Activated CD4-positive, alpha-beta memory T cell treated with anti-CD3 and anti-CD28 coated beads for 36 hours (primary cell): ENCODE measurements at regions of chrX and their contacts with region 1.

Region 1: GRCh38 chrX:24371391-24371972 is 11.0 kb downstream of the SUPT20HL1 start:
- DNase-seq: peak; percentile 66
- H3K4me3 Mint-ChIP-seq: peak overlapping the region; percentile 23
- H3K27ac Mint-ChIP-seq: no peak overlapping the region
- H3K4me1 Mint-ChIP-seq: peaks cover 10% of the 10 kb centered on the region
- H3K27me3 Mint-ChIP-seq: peaks cover 2% of the 10 kb centered on the region

Region 2: GRCh38 chrX:24294620-24295019 is 76.9 kb before region 1 on chrX:
- CTCF ChIA-PET with region 1: interaction called, 11 read pairs
- POLR2A ChIA-PET with region 1: no interaction called
- intact Hi-C with region 1: no loop called
- DNase-seq: peak; percentile 56
- H3K4me3 Mint-ChIP-seq: no peak overlapping the region
- H3K27ac Mint-ChIP-seq: no peak overlapping the region
- H3K4me1 Mint-ChIP-seq: no peaks in the 10 kb centered on the region
- H3K27me3 Mint-ChIP-seq: peaks cover 2% of the 10 kb centered on the region

Region 3: DNA sequence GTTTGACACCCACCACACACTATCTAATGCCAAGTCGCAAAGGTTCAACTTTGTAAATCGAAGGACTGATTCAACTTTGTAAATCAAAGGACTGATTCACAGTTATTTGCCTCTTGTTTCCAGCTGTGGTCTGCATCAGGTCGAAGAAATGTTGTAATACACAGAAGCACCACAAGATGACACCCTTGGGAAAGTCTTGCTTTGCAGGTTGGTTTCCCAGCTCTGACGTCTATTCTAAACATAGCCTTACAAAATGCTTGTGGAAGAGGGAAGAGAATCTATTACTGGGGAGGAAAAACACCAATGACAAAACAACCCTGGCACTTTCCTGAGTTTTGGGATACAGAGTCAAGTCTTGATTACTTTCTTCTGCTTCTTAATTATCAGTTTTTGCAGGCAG is 24.3 kb after region 1 on chrX:
- CTCF ChIA-PET with region 1: interaction called, 25 read pairs
- POLR2A ChIA-PET with region 1: no interaction called
- intact Hi-C with region 1: no loop called
- DNase-seq: peak; percentile 39
- H3K4me3 Mint-ChIP-seq: no peak overlapping the region
- H3K27ac Mint-ChIP-seq: no peak overlapping the region
- H3K4me1 Mint-ChIP-seq: no peaks in the 10 kb centered on the region
- H3K27me3 Mint-ChIP-seq: peaks cover 2% of the 10 kb centered on the region

Region 4: GRCh38 chrX:24412637-24413363 is 41.3 kb after region 1 on chrX:
- CTCF ChIA-PET with region 1: no interaction called
- POLR2A ChIA-PET with region 1: no interaction called
- intact Hi-C with region 1: no loop called
- DNase-seq: no peak
- H3K4me3 Mint-ChIP-seq: no peak overlapping the region
- H3K27ac Mint-ChIP-seq: no peak overlapping the region
- H3K4me1 Mint-ChIP-seq: peaks cover 3% of the 10 kb centered on the region
- H3K27me3 Mint-ChIP-seq: no peaks in the 10 kb centered on the region

Region 5: GRCh38 chrX:24426921-24427746 is 55.7 kb after region 1 on chrX:
- CTCF ChIA-PET with region 1: no interaction called
- POLR2A ChIA-PET with region 1: no interaction called
- intact Hi-C with region 1: no loop called
- DNase-seq: no peak
- H3K4me3 Mint-ChIP-seq: no peak overlapping the region
- H3K27ac Mint-ChIP-seq: no peak overlapping the region
- H3K4me1 Mint-ChIP-seq: no peaks in the 10 kb centered on the region
- H3K27me3 Mint-ChIP-seq: no peaks in the 10 kb centered on the region

Region 6: GRCh38 chrX:24561121-24561520 is 189.6 kb after region 1 on chrX:
- CTCF ChIA-PET with region 1: interaction called, 10 read pairs
- POLR2A ChIA-PET with region 1: no interaction called
- intact Hi-C with region 1: loop called (anchors 1 kb)
- DNase-seq: no peak
- H3K4me3 Mint-ChIP-seq: no peak overlapping the region
- H3K27ac Mint-ChIP-seq: no peak overlapping the region
- H3K4me1 Mint-ChIP-seq: no peaks in the 10 kb centered on the region
- H3K27me3 Mint-ChIP-seq: no peaks in the 10 kb centered on the region

Region 7: DNA sequence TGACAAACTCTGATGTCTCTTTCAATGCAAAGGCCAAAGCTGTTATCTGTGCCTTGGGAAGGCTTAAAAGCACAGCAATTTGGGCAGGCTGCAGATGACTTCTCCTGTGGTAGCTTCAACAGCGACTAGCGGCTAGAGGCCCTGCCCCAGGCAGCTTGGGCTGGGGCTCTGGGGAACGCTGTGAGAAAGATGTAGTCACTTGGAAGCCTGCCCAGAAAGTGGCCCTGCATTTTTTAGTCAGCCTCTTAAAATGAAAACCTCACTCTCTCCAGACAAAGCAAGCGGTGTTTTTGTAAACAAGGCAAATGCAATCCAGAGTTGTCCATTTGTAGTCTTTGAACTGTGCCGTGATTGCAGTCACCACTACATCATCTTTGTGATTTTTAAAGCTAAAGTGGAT is 248.2 kb after region 1 on chrX:
- CTCF ChIA-PET with region 1: no interaction called
- POLR2A ChIA-PET with region 1: no interaction called
- intact Hi-C with region 1: no loop called
- DNase-seq: no peak
- H3K4me3 Mint-ChIP-seq: no peak overlapping the region
- H3K27ac Mint-ChIP-seq: no peak overlapping the region
- H3K4me1 Mint-ChIP-seq: no peaks in the 10 kb centered on the region
- H3K27me3 Mint-ChIP-seq: no peaks in the 10 kb centered on the region